CD4-positive, alpha-beta memory T cell (primary cell): ENCODE measurements at regions of chr10 and their contacts with region 1.

Region 1: GRCh38 chr10:7756360-7756992 is 31.3 kb downstream of the KIN start:
- DNase-seq: peak in 3 of 5 donors; percentile 4 to 8 (median 5)
- H3K4me3 ChIP-seq: no peak overlapping the region
- H3K4me3 Mint-ChIP-seq: no peak overlapping the region
- H3K27ac ChIP-seq: no peak overlapping the region
- H3K27ac Mint-ChIP-seq: peak overlapping the region in 2 of 7 donors; percentile 19 to 23
- H3K4me1 ChIP-seq: no peaks in the 10 kb centered on the region
- H3K4me1 Mint-ChIP-seq: no peaks in the 10 kb centered on the region
- H3K27me3 ChIP-seq: no peaks in the 10 kb centered on the region
- H3K27me3 Mint-ChIP-seq: no peaks in the 10 kb centered on the region

Region 2: GRCh38 chr10:9302120-9302746 is 1545.8 kb after region 1 on chr10:
- CTCF ChIA-PET with region 1: interaction called, 9 read pairs
- POLR2A ChIA-PET with region 1: no interaction called
- intact Hi-C with region 1: loop called (anchors 10 kb)
- DNase-seq: peak in 4 of 5 donors; percentile 45 to 48 (median 48)
- H3K4me3 ChIP-seq: no peak overlapping the region
- H3K4me3 Mint-ChIP-seq: no peak overlapping the region
- H3K27ac ChIP-seq: no peak overlapping the region
- H3K27ac Mint-ChIP-seq: no peak overlapping the region
- H3K4me1 ChIP-seq: no peaks in the 10 kb centered on the region
- H3K4me1 Mint-ChIP-seq: no peaks in the 10 kb centered on the region
- H3K27me3 ChIP-seq: no peaks in the 10 kb centered on the region
- H3K27me3 Mint-ChIP-seq: peaks cover 9 to 13% of the 10 kb centered on the region in 2 donors